Activated naive CD4-positive, alpha-beta T cell treated with anti-CD3 and anti-CD28 coated beads for 36 hours (primary cell): ENCODE measurements at regions of chr5 and their contacts with region 1.

Region 1: DNA sequence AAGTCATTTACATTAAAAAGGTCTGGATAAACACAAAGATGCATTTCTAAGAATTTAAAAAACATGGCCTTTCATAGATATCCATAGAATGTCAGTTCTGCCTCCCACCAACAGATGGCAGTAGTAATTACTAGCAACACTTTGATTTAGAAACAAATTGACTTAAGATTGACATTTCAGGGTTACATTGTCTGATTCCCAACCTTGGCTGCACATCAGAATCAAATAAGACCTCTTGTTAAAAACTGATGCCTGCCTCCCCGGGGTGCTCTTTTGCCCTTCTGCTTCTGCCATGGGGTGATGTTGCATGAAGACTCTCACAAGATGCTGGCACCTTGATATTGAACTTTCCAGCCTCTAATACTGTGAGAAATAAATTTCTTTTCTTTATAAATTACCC is 146.2 kb upstream of the GPR151 start:
- DNase-seq: no peak
- H3K4me3 Mint-ChIP-seq: no peak overlapping the region
- H3K27ac Mint-ChIP-seq: no peak overlapping the region
- H3K4me1 Mint-ChIP-seq: peaks cover 9% of the 10 kb centered on the region
- H3K27me3 Mint-ChIP-seq: no peaks in the 10 kb centered on the region

Region 2: GRCh38 chr5:146541958-146542849 is 120.0 kb before region 1 on chr5:
- CTCF ChIA-PET with region 1: interaction called, 4 read pairs
- intact Hi-C with region 1: loop called (anchors 2 kb)
- DNase-seq: peak; percentile 81
- H3K4me3 Mint-ChIP-seq: no peak overlapping the region
- H3K27ac Mint-ChIP-seq: no peak overlapping the region
- H3K4me1 Mint-ChIP-seq: no peaks in the 10 kb centered on the region
- H3K27me3 Mint-ChIP-seq: no peaks in the 10 kb centered on the region

Region 3: GRCh38 chr5:146878476-146879172 is 216.4 kb after region 1 on chr5 and contains the start of gene PPP2R2B:
- CTCF ChIA-PET with region 1: no interaction called
- intact Hi-C with region 1: loop called (anchors 10 kb)
- DNase-seq: peak; percentile 40
- H3K4me3 Mint-ChIP-seq: peak within 1 kb of the TSS; percentile 80
- H3K27ac Mint-ChIP-seq: no peak within 1 kb of the TSS
- H3K4me1 Mint-ChIP-seq: peaks cover 11% of the 10 kb centered on the region
- H3K27me3 Mint-ChIP-seq: peaks cover 36% of the 10 kb centered on the region
- total RNA-seq, gene PPP2R2B: not detected

Region 4: DNA sequence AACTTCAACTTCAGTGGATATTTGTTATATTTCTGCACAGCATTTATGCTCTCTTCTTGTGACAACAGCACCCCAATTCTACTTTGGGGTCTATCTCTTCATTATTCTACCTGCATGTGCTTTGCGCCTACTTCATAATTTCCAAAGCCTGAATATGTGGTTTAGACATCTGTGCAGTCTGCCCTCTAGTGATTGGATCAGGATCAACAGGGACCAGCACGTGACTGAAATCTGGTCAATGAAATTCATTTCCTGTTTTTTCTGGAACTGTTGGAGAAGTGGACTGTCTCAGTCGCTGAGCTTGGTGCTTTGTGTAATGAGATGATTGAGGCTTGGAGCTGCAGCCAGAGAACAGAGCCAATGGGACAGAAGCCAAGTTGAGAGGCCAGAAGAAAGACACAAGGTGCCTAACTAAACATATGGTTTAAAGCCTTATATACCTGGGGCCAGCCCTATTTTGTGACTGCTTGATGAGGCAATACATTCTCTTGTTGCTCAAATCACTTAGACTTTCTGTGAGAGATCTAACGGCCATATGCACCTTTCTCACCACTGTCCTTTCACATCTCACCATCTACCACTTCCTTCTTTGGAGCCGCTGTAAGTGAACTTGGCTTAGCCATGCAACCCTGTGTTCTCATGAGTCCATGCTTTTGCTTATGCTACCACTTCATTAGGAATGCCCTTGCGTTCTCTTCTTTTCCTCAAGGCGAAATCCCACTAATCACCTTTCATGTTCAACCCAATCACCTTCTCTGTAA is 285.1 kb after region 1 on chr5:
- CTCF ChIA-PET with region 1: interaction called, 4 read pairs
- intact Hi-C with region 1: loop called (anchors 1 kb)
- DNase-seq: peak; percentile 31
- H3K4me3 Mint-ChIP-seq: no peak overlapping the region
- H3K27ac Mint-ChIP-seq: no peak overlapping the region
- H3K4me1 Mint-ChIP-seq: peaks cover 5% of the 10 kb centered on the region
- H3K27me3 Mint-ChIP-seq: no peaks in the 10 kb centered on the region